ENCODE measurements at regions of chr18 and their contacts with region 1.

Region 1: GRCh38 chr18:57666818-57667497 is 45.3 kb upstream of the NARS1 start:
- DNase-seq: peak; percentile 90 to 95 (median 94)
- H3K4me3 ChIP-seq: peak overlapping the region in 1 of 3 experiments; percentile 44
- H3K4me3 Mint-ChIP-seq: peak overlapping the region; percentile 41 to 53
- H3K27ac ChIP-seq: peak overlapping the region; percentile 83 to 93
- H3K27ac Mint-ChIP-seq: peak overlapping the region; percentile 92 to 98 (median 96)
- H3K4me1 ChIP-seq: peaks cover 54 to 57% of the 10 kb centered on the region in 2 donors
- H3K4me1 Mint-ChIP-seq: peaks cover 56% of the 10 kb centered on the region
- H3K27me3 ChIP-seq: no peaks in the 10 kb centered on the region
- H3K27me3 Mint-ChIP-seq: peaks cover 0 to 1% (median 0%) of the 10 kb centered on the region in 3 donors
- CTCF ChIP-seq: no peak

Region 2: DNA sequence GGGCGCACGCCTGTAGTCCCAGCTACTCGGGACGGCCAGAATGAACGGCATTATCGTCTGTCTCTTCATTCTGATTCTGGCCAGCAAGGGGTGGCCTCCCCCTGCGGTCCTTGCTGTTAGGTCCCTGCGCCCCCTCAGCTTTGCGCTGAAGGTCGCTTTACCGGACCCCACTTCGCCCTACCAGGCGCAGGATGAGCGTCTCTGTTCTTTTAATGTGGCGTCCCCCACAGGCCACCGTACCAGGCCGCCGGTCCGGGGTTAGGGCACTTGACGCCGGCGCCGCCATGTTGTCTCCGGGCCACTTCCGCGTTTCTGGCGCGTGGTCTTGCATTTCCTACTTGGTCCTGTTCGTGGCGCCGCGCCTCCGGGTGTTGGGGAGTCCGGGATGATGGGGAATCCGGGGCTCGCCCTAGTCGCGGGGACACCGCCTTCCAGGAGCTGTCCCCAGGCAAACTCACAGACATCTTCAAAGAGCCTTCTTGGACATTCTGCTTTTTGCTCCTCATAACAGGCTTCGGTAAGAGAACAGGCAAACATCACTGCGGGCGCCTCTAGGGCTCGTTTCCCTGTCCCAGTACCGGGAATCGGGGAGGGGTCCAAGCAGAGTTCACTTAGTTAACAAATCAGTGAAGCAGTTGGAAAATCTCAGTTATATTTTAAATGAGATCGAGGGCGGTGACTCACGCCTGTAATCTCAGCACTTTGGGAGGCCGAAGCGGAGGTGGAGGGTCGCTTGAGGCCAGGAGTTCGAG is 36.8 kb before region 1 on chr18:
- intact Hi-C with region 1: loop called in 1 of 2 experiments (anchors 2 kb)
- DNase-seq: peak; percentile 92 to 97 (median 95)
- H3K4me3 ChIP-seq: peak overlapping the region; percentile 65 to 82 (median 79)
- H3K4me3 Mint-ChIP-seq: peak overlapping the region; percentile 89 to 98
- H3K27ac ChIP-seq: peak overlapping the region; percentile 78 to 90
- H3K27ac Mint-ChIP-seq: peak overlapping the region; percentile 93 to 99 (median 95)
- H3K4me1 ChIP-seq: peaks cover 16 to 21% of the 10 kb centered on the region in 2 donors
- H3K4me1 Mint-ChIP-seq: peaks cover 18% of the 10 kb centered on the region
- H3K27me3 ChIP-seq: no peaks in the 10 kb centered on the region
- H3K27me3 Mint-ChIP-seq: no peaks in the 10 kb centered on the region
- CTCF ChIP-seq: peak; percentile 78

Region 3: DNA sequence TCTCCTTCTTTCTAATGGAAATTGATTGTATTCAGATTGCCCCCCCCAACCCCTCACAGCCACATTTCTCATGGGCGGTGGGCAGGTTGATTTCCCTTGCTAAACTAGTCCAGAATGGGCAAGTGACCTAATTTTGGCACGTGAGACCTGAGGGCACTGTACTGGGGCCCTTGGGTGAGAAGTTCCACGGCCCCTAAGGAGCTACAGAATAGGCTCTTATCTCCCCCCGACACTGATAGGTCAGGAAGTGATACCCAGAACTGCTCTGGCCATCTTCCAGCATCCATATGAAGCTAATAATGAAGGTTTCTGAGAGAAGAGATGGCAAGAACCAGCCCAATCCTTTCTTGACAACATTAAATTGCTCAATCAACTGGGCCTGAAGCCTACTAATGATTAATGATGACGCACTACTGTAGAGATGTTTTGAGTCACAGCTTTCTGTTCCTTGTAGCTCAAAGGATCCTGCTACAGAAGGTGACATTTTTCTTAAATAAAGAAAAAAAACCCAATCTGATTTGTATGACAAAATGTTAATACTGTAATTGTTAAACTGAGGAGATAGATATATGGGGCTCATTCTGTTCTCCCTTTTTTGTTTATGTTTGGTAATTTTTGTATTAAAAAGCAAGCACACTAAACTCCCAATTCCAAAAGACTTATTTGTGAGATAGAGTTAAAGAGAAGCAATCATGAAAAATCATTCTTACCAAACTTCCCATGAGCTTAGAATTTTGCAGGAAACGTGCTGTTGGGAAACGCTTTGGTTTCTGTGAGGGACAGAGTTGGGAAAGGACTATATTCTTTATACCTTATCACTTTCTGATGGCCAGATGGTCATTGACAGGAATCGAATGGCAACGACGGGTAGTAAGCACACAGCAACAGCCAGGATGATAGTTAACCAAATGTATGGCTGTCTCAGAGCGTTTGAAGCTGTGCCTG is 17.1 kb before region 1 on chr18:
- intact Hi-C with region 1: loop called in 1 of 2 experiments (anchors 2 kb)
- DNase-seq: peak; percentile 79 to 96 (median 91)
- H3K4me3 ChIP-seq: peak overlapping the region in 1 of 3 experiments; percentile 17
- H3K4me3 Mint-ChIP-seq: peak overlapping the region in 1 of 2 donors; percentile 21
- H3K27ac ChIP-seq: peak overlapping the region; percentile 71 to 86
- H3K27ac Mint-ChIP-seq: peak overlapping the region; percentile 91 to 98 (median 96)
- H3K4me1 ChIP-seq: peaks cover 16 to 21% of the 10 kb centered on the region in 2 donors
- H3K4me1 Mint-ChIP-seq: peaks cover 18% of the 10 kb centered on the region
- H3K27me3 ChIP-seq: no peaks in the 10 kb centered on the region
- H3K27me3 Mint-ChIP-seq: peaks cover 0 to 4% (median 2%) of the 10 kb centered on the region in 3 donors
- CTCF ChIP-seq: no peak

Region 4: DNA sequence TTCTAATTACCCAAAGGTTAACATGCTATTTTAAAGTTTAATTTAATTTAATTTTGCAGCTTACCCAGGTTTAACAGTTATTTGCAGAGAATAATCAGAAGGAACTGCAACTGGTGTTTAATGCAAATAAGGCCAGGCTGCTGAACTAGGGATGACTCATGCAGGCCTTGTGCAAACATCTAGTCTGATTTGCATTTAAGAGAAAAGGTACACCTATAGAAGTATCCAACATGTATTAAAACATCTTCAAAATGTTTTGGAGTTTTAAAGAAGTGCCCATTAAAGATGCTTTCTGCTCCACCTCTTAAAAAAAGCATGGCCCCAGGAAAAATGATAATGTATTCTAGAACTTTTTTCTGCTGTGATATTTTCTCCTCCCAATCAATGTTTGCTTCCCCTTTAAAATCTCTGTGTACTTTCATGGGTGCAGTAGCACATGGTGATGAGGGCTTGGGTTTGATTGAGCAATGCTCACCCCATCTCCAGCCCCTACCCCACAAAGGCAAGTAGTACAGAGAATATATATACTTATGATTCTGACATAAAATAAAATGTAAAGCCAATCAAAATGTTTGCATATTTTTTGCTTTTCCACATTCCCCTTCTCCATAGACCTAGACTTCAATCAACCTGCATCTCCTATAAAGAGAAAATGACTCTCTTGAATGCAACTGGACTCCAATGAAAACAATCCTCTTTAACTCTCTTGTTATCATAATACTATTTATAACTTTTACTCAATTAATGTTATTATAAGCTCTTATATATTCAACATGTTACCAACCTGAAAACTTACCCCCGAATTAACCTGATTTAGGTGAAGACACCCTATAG is 82.0 kb after region 1 on chr18:
- intact Hi-C with region 1: loop called in 1 of 2 experiments (anchors 10 kb)
- DNase-seq: peak; percentile 50 to 77 (median 70)
- H3K4me3 ChIP-seq: peak overlapping the region in 1 of 3 experiments; percentile 58
- H3K4me3 Mint-ChIP-seq: no peak overlapping the region
- H3K27ac ChIP-seq: peak overlapping the region in 1 of 2 donors; percentile 71
- H3K27ac Mint-ChIP-seq: peak overlapping the region; percentile 44 to 87 (median 79)
- H3K4me1 ChIP-seq: peaks cover 26 to 31% of the 10 kb centered on the region in 2 donors
- H3K4me1 Mint-ChIP-seq: peaks cover 25% of the 10 kb centered on the region
- H3K27me3 ChIP-seq: no peaks in the 10 kb centered on the region
- H3K27me3 Mint-ChIP-seq: no peaks in the 10 kb centered on the region
- CTCF ChIP-seq: no peak

Measured in CD14-positive monocyte (primary cell).